Activated CD8-positive, alpha-beta T cell treated with anti-CD3 and anti-CD28 coated beads, Interleukin-2, amount 10 ng/mL, durations not matched to agents 7 days and 5 days (primary cell): ENCODE measurements at regions of chr19 and their contacts with region 1.

Region 1: DNA sequence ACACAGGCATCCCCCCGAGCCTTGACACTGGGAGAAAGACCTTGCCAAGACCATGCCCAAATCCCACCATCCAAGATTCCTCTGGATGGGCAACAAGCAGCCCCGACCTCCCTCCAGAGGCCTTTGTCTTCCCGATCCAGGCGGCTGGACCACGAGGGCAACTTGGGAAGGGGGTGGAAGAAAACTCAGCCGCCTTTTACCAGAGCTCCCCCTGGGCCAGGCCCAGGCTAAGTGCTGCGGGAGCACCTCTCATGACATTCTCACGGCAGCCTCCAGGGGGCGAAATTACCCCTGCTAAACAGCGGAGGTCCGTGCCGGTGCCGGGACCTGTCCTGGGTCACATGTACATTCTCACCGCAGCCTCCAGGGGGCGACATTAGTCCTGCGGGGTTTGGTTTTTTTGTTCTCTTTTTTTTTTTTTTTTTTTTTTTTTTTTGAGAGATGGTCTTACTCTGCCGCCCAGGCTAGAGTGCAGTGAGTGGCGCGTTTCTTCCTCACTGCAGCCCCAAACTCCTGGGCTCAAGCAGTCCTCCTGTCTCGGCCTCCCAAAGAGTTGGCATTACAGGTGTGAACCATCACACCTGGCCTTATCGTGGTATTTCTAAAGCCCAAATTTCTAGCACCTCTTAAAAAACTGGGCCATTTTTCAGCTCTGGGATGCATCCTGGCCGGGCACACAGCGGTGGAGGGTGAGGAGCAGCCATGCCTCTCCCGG is 2.1 kb upstream of the RSPH6A start:
- DNase-seq: peak; percentile 98
- ATAC-seq: peak; percentile 97
- H3K4me3 Mint-ChIP-seq: no peak overlapping the region
- H3K27ac Mint-ChIP-seq: peak overlapping the region; percentile 34
- H3K4me1 Mint-ChIP-seq: peaks cover 6% of the 10 kb centered on the region
- H3K27me3 Mint-ChIP-seq: no peaks in the 10 kb centered on the region

Region 2: DNA sequence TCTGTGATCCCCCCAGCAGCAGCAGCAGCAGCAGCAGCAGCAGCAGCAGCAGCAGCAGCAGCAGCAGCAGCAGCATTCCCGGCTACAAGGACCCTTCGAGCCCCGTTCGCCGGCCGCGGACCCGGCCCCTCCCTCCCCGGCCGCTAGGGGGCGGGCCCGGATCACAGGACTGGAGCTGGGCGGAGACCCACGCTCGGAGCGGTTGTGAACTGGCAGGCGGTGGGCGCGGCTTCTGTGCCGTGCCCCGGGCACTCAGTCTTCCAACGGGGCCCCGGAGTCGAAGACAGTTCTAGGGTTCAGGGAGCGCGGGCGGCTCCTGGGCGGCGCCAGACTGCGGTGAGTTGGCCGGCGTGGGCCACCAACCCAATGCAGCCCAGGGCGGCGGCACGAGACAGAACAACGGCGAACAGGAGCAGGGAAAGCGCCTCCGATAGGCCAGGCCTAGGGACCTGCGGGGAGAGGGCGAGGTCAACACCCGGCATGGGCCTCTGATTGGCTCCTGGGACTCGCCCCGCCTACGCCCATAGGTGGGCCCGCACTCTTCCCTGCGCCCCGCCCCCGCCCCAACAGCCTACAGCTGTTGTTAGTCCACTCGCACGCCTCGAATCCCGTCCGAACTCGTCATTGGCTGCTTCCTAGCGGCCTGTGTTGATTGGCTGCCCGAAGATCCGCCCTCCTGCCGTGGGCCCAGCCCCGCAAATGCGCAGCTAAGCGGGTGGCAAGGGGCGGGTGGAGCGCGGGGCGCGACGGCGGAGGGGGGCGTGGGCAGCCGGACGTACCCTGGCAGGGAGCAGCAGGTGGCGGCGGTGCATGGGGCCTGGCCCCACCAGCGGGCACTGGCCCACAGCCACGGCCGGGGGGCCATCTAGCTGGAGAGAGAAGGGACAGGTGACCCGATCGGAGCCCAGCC is 46.7 kb before region 1 on chr19:
- CTCF ChIA-PET with region 1: interaction called, 29 read pairs
- POLR2A ChIA-PET with region 1: interaction called, 3 read pairs
- DNase-seq: peak; percentile 91
- ATAC-seq: peak; percentile 78
- H3K4me3 Mint-ChIP-seq: peak overlapping the region; percentile 81
- H3K27ac Mint-ChIP-seq: peak overlapping the region; percentile 74
- H3K4me1 Mint-ChIP-seq: peaks cover 23% of the 10 kb centered on the region
- H3K27me3 Mint-ChIP-seq: peaks cover 29% of the 10 kb centered on the region

Region 3: DNA sequence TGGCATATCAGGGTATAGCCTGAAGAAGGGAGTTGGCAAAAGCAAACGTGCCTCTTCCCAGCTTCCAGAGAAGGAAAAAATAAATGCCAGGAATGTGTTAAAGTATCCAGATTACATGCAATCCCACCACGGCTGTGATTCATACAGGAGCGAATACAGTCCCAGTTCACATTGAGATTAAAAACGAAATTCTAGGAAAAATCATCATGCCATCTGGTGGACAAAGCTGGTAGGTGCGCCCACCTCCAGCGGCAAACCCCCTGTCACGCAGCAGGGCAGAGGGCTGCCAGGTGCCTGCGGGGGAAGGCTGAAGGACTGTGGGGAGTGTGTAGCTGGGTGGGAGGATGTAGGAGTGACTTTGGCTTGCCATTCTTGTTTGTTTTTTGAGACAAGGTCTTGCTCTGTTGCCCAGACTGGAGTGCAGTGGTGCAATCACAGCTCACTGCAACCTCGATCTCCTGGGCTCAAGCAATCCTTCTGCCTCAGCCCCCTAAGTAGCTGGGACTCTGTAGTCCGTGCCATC is 18.1 kb before region 1 on chr19:
- CTCF ChIA-PET with region 1: interaction called, 32 read pairs
- POLR2A ChIA-PET with region 1: no interaction called
- DNase-seq: peak; percentile 65
- ATAC-seq: peak; percentile 66
- H3K4me3 Mint-ChIP-seq: no peak overlapping the region
- H3K27ac Mint-ChIP-seq: no peak overlapping the region
- H3K4me1 Mint-ChIP-seq: peaks cover 5% of the 10 kb centered on the region
- H3K27me3 Mint-ChIP-seq: peaks cover 34% of the 10 kb centered on the region

Region 4: DNA sequence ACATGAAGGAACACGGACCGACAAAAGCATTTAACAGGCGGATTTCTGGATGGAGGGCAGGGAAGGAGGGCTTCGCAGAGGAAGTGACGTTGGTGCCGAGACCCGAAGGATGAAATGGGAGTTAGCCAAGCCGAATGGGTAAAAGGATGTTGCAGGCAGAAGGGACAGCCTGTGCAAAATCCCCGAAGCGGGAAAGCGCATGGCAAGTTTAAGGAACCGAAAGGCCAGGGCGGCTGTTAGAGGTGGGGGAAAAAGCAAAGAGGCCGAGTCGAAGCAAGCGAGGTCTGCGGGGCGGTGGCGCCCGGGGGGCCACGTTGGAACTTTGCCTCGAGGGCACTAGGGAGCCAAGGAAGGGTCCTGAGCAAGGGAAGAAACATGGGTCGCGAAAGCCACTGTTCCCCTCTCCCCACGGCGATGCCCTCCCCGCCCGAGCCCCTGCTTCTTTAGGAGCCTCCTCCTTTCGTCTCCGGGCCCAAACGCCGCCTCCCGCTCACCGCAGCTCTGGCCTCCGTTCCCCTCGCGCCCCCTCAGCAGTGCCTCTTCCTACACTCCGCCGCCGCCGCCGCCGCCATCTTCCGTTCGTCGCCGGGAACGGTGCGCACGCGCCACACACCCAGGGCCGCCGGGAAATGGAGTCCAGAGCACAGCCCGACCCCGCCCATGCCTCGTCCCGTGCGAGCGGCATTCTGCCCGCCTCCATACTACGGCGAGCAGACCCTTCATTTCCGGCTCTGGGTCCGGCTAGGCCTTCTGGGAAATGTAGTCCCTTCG is 45.6 kb after region 1 on chr19 and contains the start of gene SYMPK:
- CTCF ChIA-PET with region 1: interaction called, 19 read pairs
- POLR2A ChIA-PET with region 1: no interaction called
- DNase-seq: peak; percentile 99
- ATAC-seq: peak; percentile 96
- H3K4me3 Mint-ChIP-seq: peak within 1 kb of the TSS; percentile 87
- H3K27ac Mint-ChIP-seq: peak within 1 kb of the TSS; percentile 98
- H3K4me1 Mint-ChIP-seq: peaks cover 33% of the 10 kb centered on the region
- H3K27me3 Mint-ChIP-seq: peaks cover 24% of the 10 kb centered on the region
- total RNA-seq, gene SYMPK: 97.3 to 98.3 TPM

Region 5: DNA sequence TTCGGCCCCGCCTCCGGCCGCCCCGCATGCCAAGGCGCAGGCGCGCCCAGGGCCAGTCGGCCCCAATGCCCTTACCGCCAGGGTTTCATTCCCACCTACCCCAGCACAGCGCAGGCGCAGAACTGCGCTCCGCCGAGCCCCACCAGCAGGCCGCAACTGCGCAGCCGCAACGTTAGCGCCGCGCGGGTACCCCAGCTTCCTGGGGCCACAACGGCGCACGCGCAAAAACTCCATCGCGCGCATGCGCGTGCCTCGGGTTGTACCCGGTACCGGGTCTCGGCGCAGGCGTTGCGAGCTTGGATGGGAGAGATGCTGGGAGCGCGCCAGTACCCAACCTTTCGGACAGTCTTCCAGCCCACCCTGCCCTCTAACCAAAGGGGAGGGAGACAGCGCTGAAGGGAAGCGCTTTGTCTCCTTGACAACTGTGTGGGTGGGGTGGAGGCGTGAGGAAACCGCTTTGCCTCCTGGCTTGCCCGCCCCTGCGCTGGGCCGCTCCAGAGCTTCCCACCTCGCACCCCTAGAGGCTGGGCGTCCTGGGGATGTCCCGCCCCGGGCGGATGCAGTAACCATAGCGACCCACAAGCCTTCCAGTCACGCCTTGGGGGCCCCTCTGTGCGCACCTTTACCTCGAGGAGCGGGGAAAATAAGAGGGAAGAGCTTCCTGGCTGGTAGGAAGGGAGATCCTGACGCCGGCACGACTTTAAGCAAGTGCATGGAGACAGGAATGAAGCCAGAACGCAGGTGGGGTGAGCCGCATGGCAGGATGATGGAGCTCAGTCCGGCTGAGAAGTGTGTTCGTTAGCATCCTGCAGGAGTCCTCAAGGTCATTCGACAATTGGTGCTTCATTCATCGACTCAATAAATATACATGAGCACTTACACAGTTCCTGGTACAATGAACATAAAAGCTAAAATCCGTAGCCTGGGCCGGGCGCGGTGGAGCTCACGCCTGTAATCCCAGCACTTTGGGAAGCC is 85.8 kb after region 1 on chr19:
- CTCF ChIA-PET with region 1: interaction called, 12 read pairs
- POLR2A ChIA-PET with region 1: no interaction called
- DNase-seq: peak; percentile 99
- ATAC-seq: peak; percentile 89
- H3K4me3 Mint-ChIP-seq: peak overlapping the region; percentile 92
- H3K27ac Mint-ChIP-seq: peak overlapping the region; percentile 77
- H3K4me1 Mint-ChIP-seq: peaks cover 28% of the 10 kb centered on the region
- H3K27me3 Mint-ChIP-seq: peaks cover 8% of the 10 kb centered on the region

Region 6: GRCh38 chr19:45913874-45914830 is 97.0 kb after region 1 on chr19 and contains the start of gene NANOS2:
- CTCF ChIA-PET with region 1: no interaction called
- POLR2A ChIA-PET with region 1: no interaction called
- DNase-seq: peak; percentile 51
- ATAC-seq: no peak
- H3K4me3 Mint-ChIP-seq: no peak within 1 kb of the TSS
- H3K27ac Mint-ChIP-seq: no peak within 1 kb of the TSS
- H3K4me1 Mint-ChIP-seq: peaks cover 28% of the 10 kb centered on the region
- H3K27me3 Mint-ChIP-seq: peaks cover 29% of the 10 kb centered on the region
- total RNA-seq, gene NANOS2: not detected

Region 7: GRCh38 chr19:46081928-46082727 is 265.0 kb after region 1 on chr19:
- CTCF ChIA-PET with region 1: no interaction called
- POLR2A ChIA-PET with region 1: no interaction called
- DNase-seq: no peak
- ATAC-seq: no peak
- H3K4me3 Mint-ChIP-seq: no peak overlapping the region
- H3K27ac Mint-ChIP-seq: no peak overlapping the region
- H3K4me1 Mint-ChIP-seq: no peaks in the 10 kb centered on the region
- H3K27me3 Mint-ChIP-seq: peaks cover 52% of the 10 kb centered on the region